ENCODE measurements at regions of chr3 and their contacts with region 1.

Region 1: DNA sequence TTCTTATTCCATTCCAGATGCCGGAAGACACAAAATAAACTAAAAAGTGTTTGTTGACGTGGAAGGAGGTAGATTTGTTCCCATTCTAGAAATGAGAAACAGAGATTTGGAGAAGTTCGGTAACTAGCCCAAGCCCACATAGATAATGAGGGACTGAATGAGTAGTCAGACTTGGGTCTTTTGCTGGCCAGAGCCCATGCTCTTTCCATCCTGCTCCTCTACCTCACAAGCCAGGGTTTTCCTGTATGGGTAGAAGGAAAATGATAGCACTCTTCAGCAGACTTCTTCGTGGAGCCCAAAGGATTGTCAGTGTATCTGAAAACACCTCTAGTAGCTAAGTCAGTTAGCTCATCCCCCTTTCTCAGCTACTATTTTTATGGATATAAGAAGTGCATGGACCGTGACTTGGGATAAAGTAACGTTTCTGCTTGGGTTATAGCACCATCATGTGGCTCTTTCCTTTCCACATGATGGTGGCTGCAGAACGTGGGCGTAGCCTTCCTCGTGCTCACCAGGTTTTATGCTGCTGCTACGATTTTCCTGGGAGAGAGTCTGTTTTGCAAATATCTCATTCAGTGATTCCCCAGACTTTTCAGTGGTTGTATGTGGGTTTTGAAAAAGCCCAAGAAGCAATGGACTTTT is 84.6 kb downstream of the DGKG start:
- DNase-seq: peak; percentile 40
- ATAC-seq: peak; percentile 99
- H3K4me3 ChIP-seq: no peak overlapping the region
- H3K27ac ChIP-seq: no peak overlapping the region
- H3K4me1 ChIP-seq: peaks cover 0 to 5% of the 10 kb centered on the region in 2 experiments; a peak in 1 of 4 replicates
- H3K27me3 ChIP-seq: no peaks in the 10 kb centered on the region
- CTCF ChIP-seq: peak; percentile 49 to 80 (median 68)
- POLR2A ChIP-seq: no peak
- RAD21 ChIP-seq: peak; percentile 93

Region 2: GRCh38 chr3:185858502-185859225 is 418.7 kb before region 1 on chr3:
- CTCF ChIA-PET with region 1: no interaction called
- POLR2A ChIA-PET with region 1: no interaction called
- RAD21 ChIA-PET with region 1: no interaction called
- intact Hi-C with region 1: loop called (anchors 5 kb)
- DNase-seq: no peak
- ATAC-seq: no peak
- H3K4me3 ChIP-seq: no peak overlapping the region
- H3K27ac ChIP-seq: no peak overlapping the region
- H3K4me1 ChIP-seq: no peaks in the 10 kb centered on the region
- H3K27me3 ChIP-seq: no peaks in the 10 kb centered on the region
- CTCF ChIP-seq: no peak
- POLR2A ChIP-seq: no peak
- RAD21 ChIP-seq: no peak

Region 3: GRCh38 chr3:186209810-186210752 is 67.3 kb before region 1 on chr3:
- CTCF ChIA-PET with region 1: no interaction called
- POLR2A ChIA-PET with region 1: no interaction called
- RAD21 ChIA-PET with region 1: no interaction called
- intact Hi-C with region 1: no loop called
- DNase-seq: no peak
- ATAC-seq: no peak
- H3K4me3 ChIP-seq: no peak overlapping the region
- H3K27ac ChIP-seq: no peak overlapping the region
- H3K4me1 ChIP-seq: peaks cover 11 to 18% of the 10 kb centered on the region in 2 experiments
- H3K27me3 ChIP-seq: no peaks in the 10 kb centered on the region
- CTCF ChIP-seq: no peak
- POLR2A ChIP-seq: no peak
- RAD21 ChIP-seq: no peak

Region 4: GRCh38 chr3:186476044-186476468 is 198.7 kb after region 1 on chr3:
- CTCF ChIA-PET with region 1: no interaction called
- POLR2A ChIA-PET with region 1: no interaction called
- RAD21 ChIA-PET with region 1: no interaction called
- intact Hi-C with region 1: no loop called
- DNase-seq: no peak
- ATAC-seq: no peak
- H3K4me3 ChIP-seq: no peak overlapping the region
- H3K27ac ChIP-seq: no peak overlapping the region
- H3K4me1 ChIP-seq: no peaks in the 10 kb centered on the region
- H3K27me3 ChIP-seq: no peaks in the 10 kb centered on the region
- CTCF ChIP-seq: no peak
- POLR2A ChIP-seq: no peak
- RAD21 ChIP-seq: no peak

Region 5: DNA sequence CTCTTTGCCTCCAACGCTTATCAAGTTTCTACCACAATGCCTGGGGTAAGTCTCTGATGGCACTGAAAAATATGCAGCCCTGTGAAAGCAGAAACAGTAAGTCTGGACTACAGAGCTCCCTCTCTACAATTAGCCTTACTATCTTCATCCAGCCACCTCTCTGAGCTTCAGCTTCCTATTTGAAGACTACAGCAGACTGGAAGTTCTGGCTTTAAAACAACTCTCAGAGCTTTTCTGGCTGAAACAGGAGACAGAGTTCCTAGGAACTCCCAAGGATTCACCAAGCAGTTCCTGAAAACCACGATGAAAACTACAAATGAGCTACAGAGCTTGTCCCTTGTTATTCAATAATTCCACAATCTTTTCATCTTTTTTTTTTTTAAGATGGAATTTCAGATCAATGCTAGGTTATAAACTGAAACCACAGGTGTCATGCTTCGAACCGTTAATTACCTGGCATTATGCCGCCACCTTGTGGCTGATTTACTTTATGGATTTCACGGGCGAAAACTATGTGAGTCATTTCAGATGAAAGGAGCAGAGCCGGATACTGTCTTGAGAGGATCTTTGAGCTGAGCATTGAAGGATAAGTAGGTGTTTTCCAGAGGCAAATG is 262.9 kb after region 1 on chr3:
- CTCF ChIA-PET with region 1: interaction called, 16 read pairs
- POLR2A ChIA-PET with region 1: no interaction called
- RAD21 ChIA-PET with region 1: no interaction called
- intact Hi-C with region 1: no loop called
- DNase-seq: peak; percentile 76
- ATAC-seq: peak; percentile 93
- H3K4me3 ChIP-seq: no peak overlapping the region
- H3K27ac ChIP-seq: no peak overlapping the region
- H3K4me1 ChIP-seq: peaks cover 9 to 17% of the 10 kb centered on the region in 2 experiments; a peak in 3 of 4 replicates
- H3K27me3 ChIP-seq: no peaks in the 10 kb centered on the region
- CTCF ChIP-seq: peak; percentile 50 to 83 (median 78)
- POLR2A ChIP-seq: no peak
- RAD21 ChIP-seq: peak; percentile 92